PC-9 (cell line): ENCODE measurements at regions of chr13 and their contacts with region 1.

Region 1: DNA sequence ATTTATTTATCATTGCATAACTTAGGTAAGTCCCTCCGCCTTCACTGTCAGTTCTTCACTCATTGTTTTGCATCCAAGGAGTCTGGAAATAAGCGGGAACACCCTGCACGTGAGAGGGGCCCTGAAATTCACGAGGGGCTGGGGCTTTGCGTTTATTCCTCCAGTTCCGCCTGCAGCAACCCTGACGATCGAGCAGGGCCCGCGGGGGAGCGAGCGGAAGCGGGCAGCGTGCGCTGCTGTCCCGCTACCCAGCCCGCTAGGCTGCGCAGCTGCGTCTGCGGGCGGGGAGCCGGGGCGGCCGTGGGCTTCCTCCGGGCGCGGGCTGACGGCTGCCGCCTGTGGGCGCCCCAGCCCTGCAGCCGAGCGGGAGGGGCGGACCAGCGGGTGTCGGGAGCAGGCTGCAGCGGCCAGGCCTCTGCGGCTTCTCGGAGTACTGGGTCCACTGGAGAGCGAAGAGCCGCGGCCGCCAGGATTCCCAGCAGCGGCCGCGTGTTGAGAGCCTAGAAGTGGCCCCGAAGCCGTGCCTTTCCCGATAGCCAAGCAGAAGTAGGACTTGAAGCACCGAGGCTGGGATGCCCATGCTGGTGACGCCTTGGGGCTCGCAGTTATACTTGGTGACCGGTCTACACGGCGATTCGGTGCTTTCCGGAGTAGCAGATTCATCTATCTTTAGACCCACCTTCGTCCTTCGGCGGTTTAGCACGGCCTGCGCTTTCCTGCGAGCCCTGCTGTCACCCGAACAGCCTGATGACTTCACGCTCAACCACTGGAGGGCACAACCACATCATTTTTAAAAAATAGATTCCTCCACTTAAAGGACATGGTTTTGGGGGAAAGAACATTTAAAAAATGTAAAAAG is 32.9 kb upstream of the SACS start:
- DNase-seq: peak in 1 of 2 experiments; percentile 42
- H3K4me3 ChIP-seq: peak overlapping the region; percentile 50; the same call in 1 of the 2 replicates
- H3K27ac ChIP-seq: no peak overlapping the region
- H3K4me1 ChIP-seq: no peaks in the 10 kb centered on the region
- H3K27me3 ChIP-seq: peaks cover 29% of the 10 kb centered on the region
- CTCF ChIP-seq: peak; percentile 66

Region 2: GRCh38 chr13:23579072-23579895 is 112.9 kb after region 1 on chr13:
- CTCF ChIA-PET with region 1: no interaction called
- POLR2A ChIA-PET with region 1: no interaction called
- intact Hi-C with region 1: loop called (anchors 2 kb)
- DNase-seq: peak; percentile 39 to 83
- H3K4me3 ChIP-seq: peak overlapping the region; percentile 66
- H3K27ac ChIP-seq: no peak overlapping the region
- H3K4me1 ChIP-seq: no peaks in the 10 kb centered on the region
- H3K27me3 ChIP-seq: peaks cover 13% of the 10 kb centered on the region
- CTCF ChIP-seq: no peak

Region 3: DNA sequence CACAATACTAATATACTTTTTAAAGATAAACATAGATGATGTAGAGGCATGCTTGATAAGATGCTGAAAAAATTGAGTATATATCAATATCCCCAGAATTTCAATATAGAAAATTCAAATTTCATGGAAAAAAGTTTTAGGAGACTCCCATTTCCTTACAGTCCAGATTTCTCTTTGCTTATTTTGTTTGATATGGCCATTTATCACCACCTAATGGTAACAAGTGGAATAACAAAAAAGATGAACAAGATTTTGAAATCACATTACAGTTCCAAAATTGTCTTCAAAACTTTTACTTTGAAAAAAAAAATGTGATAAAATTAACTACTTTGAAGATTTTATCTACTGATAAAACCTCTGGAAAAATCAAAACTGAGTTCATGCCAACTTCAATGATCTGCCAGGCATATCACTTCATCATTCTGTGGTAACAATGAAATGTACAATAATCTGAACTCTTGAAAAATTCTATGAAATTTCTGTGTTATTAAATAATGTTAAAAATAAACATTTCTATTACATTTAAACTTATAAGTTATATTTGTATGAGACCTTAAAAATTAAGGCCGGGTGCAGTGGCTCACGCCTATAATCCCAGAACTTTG is 405.3 kb after region 1 on chr13:
- CTCF ChIA-PET with region 1: no interaction called
- POLR2A ChIA-PET with region 1: no interaction called
- intact Hi-C with region 1: loop called (anchors 5 kb)
- DNase-seq: no peak
- H3K4me3 ChIP-seq: no peak overlapping the region
- H3K27ac ChIP-seq: no peak overlapping the region
- H3K4me1 ChIP-seq: no peaks in the 10 kb centered on the region
- H3K27me3 ChIP-seq: no peaks in the 10 kb centered on the region
- CTCF ChIP-seq: peak; percentile 77

Region 4: GRCh38 chr13:23888658-23889614 is 422.6 kb after region 1 on chr13 and contains the start of gene MIPEP:
- CTCF ChIA-PET with region 1: no interaction called
- POLR2A ChIA-PET with region 1: no interaction called
- intact Hi-C with region 1: loop called (anchors 5 kb)
- DNase-seq: peak; percentile 82 to 86
- H3K4me3 ChIP-seq: peak within 1 kb of the TSS; percentile 92
- H3K27ac ChIP-seq: peak within 1 kb of the TSS; percentile 39
- H3K4me1 ChIP-seq: peaks cover 9% of the 10 kb centered on the region
- H3K27me3 ChIP-seq: no peaks in the 10 kb centered on the region
- CTCF ChIP-seq: peak; percentile 58
- total RNA-seq, gene MIPEP: 18.6 and 22.9 TPM in 2 replicates